ENCODE measurements at regions of chr3 and their contacts with region 1.

Region 1: DNA sequence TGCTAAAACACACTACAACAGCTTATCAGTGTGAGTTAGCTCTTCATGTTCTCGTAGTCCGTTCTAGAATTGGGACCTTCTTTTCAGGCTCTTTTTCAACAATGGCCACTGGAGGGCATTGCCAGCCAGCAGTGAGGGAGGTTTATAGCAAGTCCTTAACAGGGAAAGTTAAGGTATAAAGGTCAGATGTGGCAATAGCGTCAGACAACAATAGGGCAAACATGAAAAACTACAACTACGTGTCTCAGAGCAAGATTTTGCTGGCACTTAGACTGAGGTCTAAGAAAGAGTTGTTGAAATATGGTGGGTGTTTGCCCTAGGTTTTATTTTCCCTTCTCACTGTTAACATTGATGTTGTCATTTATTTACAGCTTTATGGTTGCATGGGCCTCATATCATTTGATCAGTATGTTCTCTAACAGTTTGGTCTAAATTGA is 161.4 kb downstream of the GMNC start:
- DNase-seq: no peak
- ATAC-seq: no peak
- H3K4me3 ChIP-seq: no peak overlapping the region
- H3K27ac ChIP-seq: no peak overlapping the region
- H3K4me1 ChIP-seq: no peaks in the 10 kb centered on the region
- H3K27me3 ChIP-seq: no peaks in the 10 kb centered on the region
- CTCF ChIP-seq: peak in 1 of 5 experiments; percentile 22
- POLR2A ChIP-seq: no peak

Region 2: DNA sequence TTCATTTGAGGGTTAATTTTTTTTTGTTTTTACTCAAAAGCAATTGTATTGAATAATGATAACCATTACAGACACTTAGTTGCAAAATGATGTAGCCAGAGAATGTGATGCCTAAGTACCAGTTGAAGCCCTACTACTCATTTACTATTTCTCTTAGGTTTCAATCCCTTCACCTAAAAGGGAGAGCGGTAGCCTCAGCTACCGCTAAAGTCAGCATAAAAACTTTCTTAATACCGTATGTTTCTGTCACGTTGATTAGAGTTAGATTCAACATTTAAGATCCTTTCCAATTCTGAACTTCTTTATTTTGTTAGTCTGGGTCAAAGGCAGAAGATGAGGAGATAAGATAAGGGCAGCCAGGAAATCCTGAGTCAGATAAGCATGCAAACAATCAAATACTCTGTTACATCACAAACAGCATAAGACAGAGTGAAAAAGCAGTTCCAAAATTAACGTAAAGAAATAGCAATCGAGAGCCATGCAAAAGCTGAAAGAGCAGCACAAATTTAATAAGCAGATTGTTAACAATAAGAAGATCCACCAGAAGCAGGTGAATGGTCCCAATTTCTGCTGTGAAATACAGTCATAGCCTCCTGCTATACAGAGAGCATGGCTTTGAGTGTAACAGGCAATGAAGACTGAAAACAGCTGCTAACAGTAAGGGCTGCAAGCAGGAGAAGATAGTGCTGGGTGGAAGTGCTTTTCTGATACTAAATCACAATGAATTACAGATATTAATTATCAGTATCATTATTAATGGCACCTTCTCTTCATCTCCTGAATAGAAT is 254.4 kb before region 1 on chr3:
- in situ Hi-C with region 1: no loop called
- intact Hi-C with region 1: no loop called
- DNase-seq: no peak
- ATAC-seq: no peak
- H3K4me3 ChIP-seq: no peak overlapping the region
- H3K27ac ChIP-seq: no peak overlapping the region
- H3K4me1 ChIP-seq: no peaks in the 10 kb centered on the region
- H3K27me3 ChIP-seq: no peaks in the 10 kb centered on the region
- CTCF ChIP-seq: no peak
- POLR2A ChIP-seq: no peak

Region 3: GRCh38 chr3:191051037-191051436 is 349.9 kb after region 1 on chr3:
- in situ Hi-C with region 1: no loop called
- intact Hi-C with region 1: loop called (anchors 5 kb)
- DNase-seq: no peak
- ATAC-seq: no peak
- H3K4me3 ChIP-seq: no peak overlapping the region
- H3K27ac ChIP-seq: no peak overlapping the region
- H3K4me1 ChIP-seq: no peaks in the 10 kb centered on the region
- H3K27me3 ChIP-seq: no peaks in the 10 kb centered on the region
- CTCF ChIP-seq: peak in 3 of 5 experiments; percentile 17 to 32 (median 30)
- POLR2A ChIP-seq: no peak